ENCODE measurements at regions of chr10 and their contacts with region 1.

Region 1: GRCh38 chr10:74234569-74234968 is 83.5 kb downstream of the ADK start:
- DNase-seq: no peak
- H3K4me3 ChIP-seq: no peak overlapping the region
- CTCF ChIP-seq: no peak

Region 2: DNA sequence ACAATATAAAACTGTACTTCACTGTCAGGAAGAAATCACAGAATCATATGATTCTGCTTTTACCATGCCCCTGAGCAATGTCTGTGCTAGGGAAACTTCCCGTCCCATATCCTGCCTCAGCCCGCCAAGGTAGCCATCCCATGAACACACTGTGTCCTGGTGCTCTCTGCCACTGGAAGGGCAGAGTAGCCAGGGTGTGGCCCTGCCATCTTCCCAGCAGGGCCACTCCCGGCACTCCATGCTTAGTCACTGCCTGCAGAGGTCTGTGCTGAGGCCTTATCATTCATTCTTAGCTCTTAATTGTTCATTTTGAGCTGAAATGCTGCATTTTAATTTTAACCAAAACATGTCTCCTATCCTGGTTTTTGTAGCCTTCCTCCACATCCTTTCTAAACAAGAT is 115.8 kb before region 1 on chr10:
- CTCF ChIA-PET with region 1: interaction called, 28 read pairs
- POLR2A ChIA-PET with region 1: no interaction called
- DNase-seq: no peak
- H3K4me3 ChIP-seq: no peak overlapping the region
- CTCF ChIP-seq: no peak

Region 3: GRCh38 chr10:74137992-74138391 is 96.6 kb before region 1 on chr10:
- CTCF ChIA-PET with region 1: interaction called, 14 read pairs
- POLR2A ChIA-PET with region 1: no interaction called
- DNase-seq: no peak
- H3K4me3 ChIP-seq: no peak overlapping the region
- CTCF ChIP-seq: no peak

Region 4: GRCh38 chr10:74145133-74145532 is 89.4 kb before region 1 on chr10:
- CTCF ChIA-PET with region 1: interaction called, 16 read pairs
- POLR2A ChIA-PET with region 1: no interaction called
- DNase-seq: peak; percentile 51
- H3K4me3 ChIP-seq: no peak overlapping the region
- CTCF ChIP-seq: no peak

Region 5: DNA sequence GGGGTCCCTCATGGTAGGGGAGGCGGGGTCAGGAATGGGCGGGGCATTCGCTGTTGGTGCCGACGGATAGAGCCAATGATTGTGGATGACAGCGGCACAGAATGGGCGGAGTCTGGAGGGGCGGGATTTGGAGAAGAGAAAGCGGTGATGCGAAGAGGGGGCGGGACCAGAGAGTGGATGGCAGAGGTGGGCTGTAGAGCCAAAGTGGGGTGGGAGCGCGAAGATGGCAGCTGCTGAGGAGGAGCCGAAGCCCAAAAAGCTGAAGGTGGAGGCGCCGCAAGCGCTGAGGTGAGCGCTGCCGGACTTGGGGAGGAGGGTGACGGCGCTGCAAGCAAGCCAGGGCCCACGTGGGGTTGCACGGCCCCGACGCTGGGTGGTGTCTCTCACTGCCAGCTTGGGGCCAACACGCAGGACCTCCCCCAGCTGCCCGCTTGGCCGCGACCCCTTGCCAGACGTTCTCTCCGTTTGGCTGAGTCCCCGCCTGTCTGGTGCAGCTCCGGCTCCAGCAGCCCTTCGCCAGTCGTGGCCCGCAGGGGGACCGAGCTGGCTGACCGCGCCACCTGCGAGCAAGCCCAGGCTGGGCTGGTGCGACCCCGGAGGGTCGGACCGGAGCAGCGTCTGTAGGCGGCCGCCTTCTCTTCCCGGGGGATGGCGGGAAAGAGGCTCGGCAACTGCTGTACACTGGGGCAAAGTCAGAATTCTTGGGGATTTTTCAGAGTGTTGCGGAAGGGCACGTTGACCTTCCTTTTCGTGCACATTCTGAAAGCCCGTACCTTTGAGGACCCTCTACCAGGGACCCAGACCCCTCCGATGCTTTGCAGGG is 83.3 kb before region 1 on chr10 and contains the start of gene ADK:
- CTCF ChIA-PET with region 1: interaction called, 16 read pairs
- POLR2A ChIA-PET with region 1: no interaction called
- DNase-seq: peak; percentile 69
- H3K4me3 ChIP-seq: peak within 1 kb of the TSS; percentile 98
- CTCF ChIP-seq: peak; percentile 58

Region 6: GRCh38 chr10:74194545-74194944 is 40.0 kb before region 1 on chr10:
- CTCF ChIA-PET with region 1: no interaction called
- POLR2A ChIA-PET with region 1: no interaction called
- DNase-seq: no peak
- H3K4me3 ChIP-seq: no peak overlapping the region
- CTCF ChIP-seq: no peak

Region 7: DNA sequence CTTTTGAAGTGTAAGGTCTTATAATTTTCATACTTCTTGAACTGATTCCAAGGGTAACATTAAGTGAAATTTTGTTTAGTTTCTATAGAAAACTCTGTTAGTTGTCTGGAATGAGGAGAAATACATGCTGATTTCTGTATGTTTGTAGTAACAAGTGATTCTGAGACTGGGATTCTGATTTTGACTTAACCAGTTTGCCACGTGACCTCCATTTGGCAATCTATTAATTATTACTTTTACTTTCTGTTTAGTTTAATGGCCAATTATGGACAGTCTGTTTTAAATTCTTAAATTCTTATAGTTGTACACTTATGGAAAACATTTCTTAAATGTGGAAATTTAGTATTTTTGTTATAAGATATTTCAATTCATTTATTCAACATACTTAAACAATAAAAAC is 79.6 kb after region 1 on chr10:
- CTCF ChIA-PET with region 1: no interaction called
- POLR2A ChIA-PET with region 1: no interaction called
- DNase-seq: no peak
- H3K4me3 ChIP-seq: no peak overlapping the region
- CTCF ChIP-seq: no peak

Region 8: DNA sequence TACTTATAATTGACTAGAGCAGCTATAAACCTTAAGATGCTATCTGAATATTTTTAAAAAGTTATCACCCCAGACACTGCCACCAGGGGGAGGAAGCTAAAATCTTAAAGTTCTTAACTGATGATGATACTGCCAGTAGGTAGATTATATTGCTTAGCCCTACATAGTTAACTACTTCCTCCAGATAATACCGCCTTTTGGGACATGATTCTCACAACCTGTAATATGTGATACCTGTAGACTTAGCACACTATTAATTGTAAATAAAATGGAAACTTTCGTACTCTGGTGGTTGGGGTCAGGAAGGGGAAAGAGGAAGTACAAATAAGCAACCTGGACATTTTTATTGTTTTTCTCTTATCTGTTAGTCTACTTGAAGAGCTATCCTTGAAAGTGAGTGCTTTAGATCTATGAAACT is 185.4 kb after region 1 on chr10:
- CTCF ChIA-PET with region 1: no interaction called
- POLR2A ChIA-PET with region 1: no interaction called
- DNase-seq: no peak
- H3K4me3 ChIP-seq: no peak overlapping the region
- CTCF ChIP-seq: peak; percentile 3

Measured in AG04449 (cell line).